ENCODE measurements at regions of chr22 and their contacts with region 1.

Region 1: GRCh38 chr22:23786752-23787599 is at the start of gene SMARCB1:
- DNase-seq: peak; percentile 79 to 94 (median 90)
- ATAC-seq: peak; percentile 86
- H3K4me3 ChIP-seq: peak within 1 kb of the TSS; percentile 74
- H3K4me3 Mint-ChIP-seq: peak within 1 kb of the TSS; percentile 89
- H3K27ac ChIP-seq: peak within 1 kb of the TSS; percentile 87 to 97
- H3K27ac Mint-ChIP-seq: peak within 1 kb of the TSS; percentile 93
- H3K4me1 ChIP-seq: peaks cover 37% of the 10 kb centered on the region
- H3K4me1 Mint-ChIP-seq: peaks cover 47% of the 10 kb centered on the region
- H3K27me3 ChIP-seq: no peaks in the 10 kb centered on the region
- H3K27me3 Mint-ChIP-seq: no peaks in the 10 kb centered on the region
- CTCF ChIP-seq: no peak
- total RNA-seq, gene SMARCB1: 47.1 to 51.7 TPM

Region 2: GRCh38 chr22:23591201-23591791 is 195.7 kb before region 1 on chr22:
- CTCF ChIA-PET with region 1: no interaction called
- POLR2A ChIA-PET with region 1: no interaction called
- intact Hi-C with region 1: no loop called
- DNase-seq: peak; percentile 39 to 70 (median 62)
- ATAC-seq: peak; percentile 61
- H3K4me3 ChIP-seq: no peak overlapping the region
- H3K4me3 Mint-ChIP-seq: no peak overlapping the region
- H3K27ac ChIP-seq: no peak overlapping the region
- H3K27ac Mint-ChIP-seq: no peak overlapping the region
- H3K4me1 ChIP-seq: no peaks in the 10 kb centered on the region
- H3K4me1 Mint-ChIP-seq: no peaks in the 10 kb centered on the region
- H3K27me3 ChIP-seq: no peaks in the 10 kb centered on the region
- H3K27me3 Mint-ChIP-seq: peaks cover 7% of the 10 kb centered on the region
- CTCF ChIP-seq: peak; percentile 64

Region 3: GRCh38 chr22:23655891-23656475 is 131.0 kb before region 1 on chr22:
- CTCF ChIA-PET with region 1: no interaction called
- POLR2A ChIA-PET with region 1: no interaction called
- intact Hi-C with region 1: no loop called
- DNase-seq: no peak
- ATAC-seq: no peak
- H3K4me3 ChIP-seq: no peak overlapping the region
- H3K4me3 Mint-ChIP-seq: no peak overlapping the region
- H3K27ac ChIP-seq: no peak overlapping the region
- H3K27ac Mint-ChIP-seq: no peak overlapping the region
- H3K4me1 ChIP-seq: no peaks in the 10 kb centered on the region
- H3K4me1 Mint-ChIP-seq: no peaks in the 10 kb centered on the region
- H3K27me3 ChIP-seq: no peaks in the 10 kb centered on the region
- H3K27me3 Mint-ChIP-seq: no peaks in the 10 kb centered on the region
- CTCF ChIP-seq: no peak

Region 4: DNA sequence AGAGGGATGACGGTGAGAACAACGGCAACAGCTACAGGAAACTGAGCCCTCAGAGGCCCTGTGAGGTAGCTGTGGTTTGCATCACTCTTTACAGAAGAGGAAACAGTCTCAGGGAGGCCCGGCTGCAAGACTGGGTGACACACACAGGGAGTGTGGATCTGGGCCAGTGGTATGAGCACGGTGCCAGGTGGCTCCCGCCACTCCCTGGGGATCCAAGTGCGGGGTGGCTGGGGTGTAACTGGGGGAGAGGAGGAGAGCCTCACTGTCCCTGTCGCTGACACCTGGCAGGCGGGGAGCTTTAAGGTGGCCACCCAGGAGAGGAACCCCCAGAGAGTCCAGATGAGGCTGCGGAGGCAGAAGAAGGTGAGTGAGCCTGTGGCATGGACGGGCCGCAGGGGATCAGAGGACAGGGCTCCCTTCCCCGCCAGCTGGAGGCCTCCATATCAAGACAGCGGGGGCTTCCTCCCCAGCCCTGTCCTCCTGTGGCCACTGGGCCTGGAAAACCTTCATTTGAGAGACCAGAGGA is 90.6 kb before region 1 on chr22:
- CTCF ChIA-PET with region 1: interaction called, 3 read pairs
- POLR2A ChIA-PET with region 1: interaction called, 4 read pairs
- intact Hi-C with region 1: loop called in 1 of 2 experiments (anchors 5 kb)
- DNase-seq: peak; percentile 60 to 93 (median 80)
- ATAC-seq: peak; percentile 97
- H3K4me3 ChIP-seq: peak overlapping the region; percentile 53 to 67
- H3K4me3 Mint-ChIP-seq: peak overlapping the region; percentile 98
- H3K27ac ChIP-seq: peak overlapping the region; percentile 92 to 96
- H3K27ac Mint-ChIP-seq: peak overlapping the region; percentile 100
- H3K4me1 ChIP-seq: peaks cover 42% of the 10 kb centered on the region
- H3K4me1 Mint-ChIP-seq: peaks cover 52% of the 10 kb centered on the region
- H3K27me3 ChIP-seq: no peaks in the 10 kb centered on the region
- H3K27me3 Mint-ChIP-seq: no peaks in the 10 kb centered on the region
- CTCF ChIP-seq: no peak

Region 5: GRCh38 chr22:23750714-23751440 is 36.1 kb before region 1 on chr22 and contains the start of gene ZNF70:
- CTCF ChIA-PET with region 1: no interaction called
- POLR2A ChIA-PET with region 1: interaction called, 4 read pairs
- intact Hi-C with region 1: loop called (anchors 1 kb)
- DNase-seq: peak; percentile 73 to 95 (median 88)
- ATAC-seq: peak; percentile 98
- H3K4me3 ChIP-seq: peak within 1 kb of the TSS; percentile 75 to 76
- H3K4me3 Mint-ChIP-seq: peak within 1 kb of the TSS; percentile 82
- H3K27ac ChIP-seq: peak within 1 kb of the TSS; percentile 62 to 71
- H3K27ac Mint-ChIP-seq: peak within 1 kb of the TSS; percentile 80
- H3K4me1 ChIP-seq: peaks cover 7% of the 10 kb centered on the region
- H3K4me1 Mint-ChIP-seq: peaks cover 17% of the 10 kb centered on the region
- H3K27me3 ChIP-seq: no peaks in the 10 kb centered on the region
- H3K27me3 Mint-ChIP-seq: no peaks in the 10 kb centered on the region
- CTCF ChIP-seq: peak; percentile 13
- total RNA-seq, gene ZNF70: 1.7 to 1.9 TPM

Region 6: GRCh38 chr22:23838681-23839468 is 51.9 kb after region 1 on chr22 and contains the start of gene DERL3:
- CTCF ChIA-PET with region 1: no interaction called
- POLR2A ChIA-PET with region 1: interaction called, 3 read pairs
- intact Hi-C with region 1: loop called (anchors 1 kb)
- DNase-seq: peak; percentile 84 to 96 (median 92)
- ATAC-seq: peak; percentile 93
- H3K4me3 ChIP-seq: peak within 1 kb of the TSS; percentile 61 to 77
- H3K4me3 Mint-ChIP-seq: peak within 1 kb of the TSS; percentile 94
- H3K27ac ChIP-seq: peak within 1 kb of the TSS in 1 of 2 experiments; percentile 46
- H3K27ac Mint-ChIP-seq: peak within 1 kb of the TSS; percentile 82
- H3K4me1 ChIP-seq: peaks cover 7% of the 10 kb centered on the region
- H3K4me1 Mint-ChIP-seq: peaks cover 20% of the 10 kb centered on the region
- H3K27me3 ChIP-seq: no peaks in the 10 kb centered on the region
- H3K27me3 Mint-ChIP-seq: no peaks in the 10 kb centered on the region
- CTCF ChIP-seq: no peak
- total RNA-seq, gene DERL3: 0.81 to 0.92 TPM

Region 7: DNA sequence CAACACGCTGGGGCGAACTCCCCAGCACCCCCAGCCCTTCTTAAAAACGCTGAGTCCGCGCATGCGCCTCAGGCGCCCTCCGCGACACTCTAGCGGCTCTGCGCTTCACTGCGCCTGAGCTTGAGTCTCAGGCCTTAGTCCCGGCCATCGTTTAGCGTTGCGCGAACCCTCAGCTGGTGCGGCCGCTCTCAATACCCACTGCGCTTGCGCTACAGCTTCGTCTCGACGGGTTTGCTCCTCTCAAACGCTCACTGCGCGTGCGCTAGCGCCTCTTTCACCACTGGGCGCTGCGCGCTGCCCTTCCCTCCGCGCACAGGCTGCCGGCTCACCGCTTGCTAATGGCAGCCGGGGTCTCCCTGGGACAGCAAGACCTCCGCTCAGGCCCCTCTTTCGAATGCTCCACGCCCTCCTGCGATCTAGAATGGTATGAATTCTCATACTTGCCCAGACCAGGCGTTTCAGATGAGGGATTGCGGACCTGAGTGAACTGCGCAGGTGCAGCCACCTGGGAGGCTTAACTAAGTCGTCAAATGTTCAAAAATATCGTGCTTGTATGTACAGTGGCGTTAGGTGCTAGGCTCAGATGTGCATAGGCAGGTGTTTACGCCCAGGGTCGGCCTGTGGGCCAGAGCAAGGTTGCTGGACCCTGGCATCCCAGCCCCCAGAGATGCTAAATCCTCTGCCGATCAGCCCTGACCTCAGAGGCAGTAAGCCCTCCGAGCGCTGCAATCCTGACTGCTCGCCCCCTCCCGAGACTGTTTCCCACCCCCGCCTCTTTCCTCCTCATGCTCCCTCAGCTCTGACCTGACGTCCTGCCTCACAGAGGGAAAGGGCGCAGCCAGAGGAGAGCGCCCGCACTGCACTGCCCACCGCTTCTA is 70.9 kb after region 1 on chr22 and contains the start of gene SLC2A11:
- CTCF ChIA-PET with region 1: no interaction called
- POLR2A ChIA-PET with region 1: no interaction called
- intact Hi-C with region 1: loop called in 1 of 2 experiments (anchors 5 kb)
- DNase-seq: peak; percentile 83 to 98 (median 93)
- ATAC-seq: peak; percentile 95
- H3K4me3 ChIP-seq: peak within 1 kb of the TSS; percentile 65 to 96
- H3K4me3 Mint-ChIP-seq: peak within 1 kb of the TSS; percentile 98
- H3K27ac ChIP-seq: peak within 1 kb of the TSS; percentile 50 to 67
- H3K27ac Mint-ChIP-seq: peak within 1 kb of the TSS; percentile 85
- H3K4me1 ChIP-seq: peaks cover 11% of the 10 kb centered on the region
- H3K4me1 Mint-ChIP-seq: peaks cover 21% of the 10 kb centered on the region
- H3K27me3 ChIP-seq: no peaks in the 10 kb centered on the region
- H3K27me3 Mint-ChIP-seq: no peaks in the 10 kb centered on the region
- CTCF ChIP-seq: peak; percentile 23
- total RNA-seq, gene SLC2A11: 12.7 to 14.3 TPM

Region 8: GRCh38 chr22:23913661-23914353 is 126.8 kb after region 1 on chr22:
- CTCF ChIA-PET with region 1: no interaction called
- POLR2A ChIA-PET with region 1: interaction called, 3 read pairs
- intact Hi-C with region 1: loop called (anchors 1 to 5 kb)
- DNase-seq: peak; percentile 97 to 99 (median 99)
- ATAC-seq: peak; percentile 99
- H3K4me3 ChIP-seq: peak overlapping the region; percentile 67 to 69
- H3K4me3 Mint-ChIP-seq: peak overlapping the region; percentile 89
- H3K27ac ChIP-seq: peak overlapping the region; percentile 62 to 80
- H3K27ac Mint-ChIP-seq: peak overlapping the region; percentile 96
- H3K4me1 ChIP-seq: no peaks in the 10 kb centered on the region
- H3K4me1 Mint-ChIP-seq: peaks cover 20% of the 10 kb centered on the region
- H3K27me3 ChIP-seq: no peaks in the 10 kb centered on the region
- H3K27me3 Mint-ChIP-seq: no peaks in the 10 kb centered on the region
- CTCF ChIP-seq: no peak

Region 9: DNA sequence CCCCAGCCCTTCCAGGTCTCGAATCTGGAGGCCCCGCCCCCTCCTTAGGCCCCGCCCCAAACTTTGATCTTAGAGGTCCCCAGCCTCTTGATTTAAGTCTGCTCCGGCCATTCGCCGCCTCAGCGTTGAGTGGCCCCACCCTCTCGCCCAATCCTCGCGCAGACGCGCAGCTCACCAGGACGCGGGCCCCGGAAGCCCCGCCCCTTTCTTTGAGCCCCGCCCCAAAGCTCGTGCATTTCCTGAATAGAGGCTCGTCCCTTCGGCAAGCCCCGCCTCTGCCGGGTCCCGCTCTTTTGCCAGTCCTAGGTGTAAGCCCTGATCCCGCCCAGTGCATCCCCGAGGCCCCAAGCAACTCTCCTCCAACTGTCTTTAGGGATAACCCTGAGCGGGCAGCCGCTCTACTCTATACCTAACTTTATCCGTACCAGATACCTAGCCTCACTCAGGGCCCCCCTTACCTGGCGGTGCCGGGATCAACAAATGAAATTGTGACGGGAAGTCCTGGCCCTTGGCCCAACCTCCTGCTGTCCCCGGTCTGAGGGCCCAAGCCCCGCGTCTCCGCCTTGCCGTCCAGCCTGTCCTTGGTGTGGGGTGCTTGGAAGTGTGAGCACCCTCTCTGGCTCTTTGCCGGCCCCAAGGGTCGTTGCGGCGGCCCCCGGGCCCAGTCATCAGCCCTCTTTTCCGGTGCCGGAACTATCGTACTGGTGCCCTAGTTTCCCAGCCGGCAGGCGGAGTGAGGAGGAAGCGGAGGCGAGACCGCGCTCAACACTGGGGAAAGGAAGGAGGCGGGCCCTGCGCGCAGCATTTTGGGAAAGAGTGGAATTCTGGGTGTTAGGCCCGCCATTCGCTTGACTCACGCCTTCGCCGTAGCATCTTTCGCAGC is 768.4 kb after region 1 on chr22 and contains the start of gene SNRPD3:
- CTCF ChIA-PET with region 1: no interaction called
- POLR2A ChIA-PET with region 1: no interaction called
- intact Hi-C with region 1: loop called in 1 of 2 experiments (anchors 10 kb)
- DNase-seq: peak; percentile 99 to 100 (median 100)
- ATAC-seq: peak; percentile 86
- H3K4me3 ChIP-seq: peak within 1 kb of the TSS; percentile 70 to 96
- H3K4me3 Mint-ChIP-seq: peak within 1 kb of the TSS; percentile 93
- H3K27ac ChIP-seq: peak within 1 kb of the TSS; percentile 73 to 99
- H3K27ac Mint-ChIP-seq: peak within 1 kb of the TSS; percentile 98
- H3K4me1 ChIP-seq: peaks cover 35% of the 10 kb centered on the region
- H3K4me1 Mint-ChIP-seq: peaks cover 68% of the 10 kb centered on the region
- H3K27me3 ChIP-seq: no peaks in the 10 kb centered on the region
- H3K27me3 Mint-ChIP-seq: no peaks in the 10 kb centered on the region
- CTCF ChIP-seq: no peak
- total RNA-seq, gene SNRPD3: 33.1 to 35.0 TPM

Measured in CD8-positive, alpha-beta T cell (primary cell).